Activated CD4-positive, alpha-beta T cell treated with anti-CD3 and anti-CD28 coated beads for 36 hours (primary cell): ENCODE measurements at regions of chr6 and their contacts with region 1.

Region 1: DNA sequence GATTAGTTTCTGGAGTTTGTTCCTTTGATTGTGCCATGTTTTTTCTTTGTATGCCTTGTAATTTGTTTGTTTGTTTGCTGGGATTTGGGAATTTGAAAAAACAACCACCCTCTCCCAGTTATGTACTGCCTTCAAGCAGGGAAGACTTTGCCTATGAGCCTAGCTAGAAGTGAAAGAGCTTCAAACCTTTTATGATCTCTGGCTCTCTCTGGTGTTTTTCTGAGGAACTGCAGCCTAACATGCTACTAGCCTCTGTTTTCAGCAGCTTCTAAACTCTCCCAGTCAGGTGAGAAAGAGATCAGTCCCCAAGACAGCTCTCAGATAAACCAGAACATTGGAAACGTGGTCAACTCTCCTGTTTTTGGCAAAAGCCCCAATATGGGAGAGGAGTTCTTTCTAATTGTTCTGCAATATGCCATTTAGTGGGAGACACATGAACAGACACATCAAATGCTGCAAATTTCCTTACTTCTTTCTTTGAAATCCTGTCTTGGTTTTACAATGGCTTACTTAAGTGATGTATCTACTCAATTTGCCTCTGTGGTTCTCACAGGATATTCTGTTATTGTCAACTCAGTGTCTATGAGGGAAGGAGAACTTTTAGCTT is 58.9 kb upstream of the SERINC1 start:
- DNase-seq: peak; percentile 58
- ATAC-seq: peak; percentile 72
- H3K4me3 Mint-ChIP-seq: no peak overlapping the region
- H3K27ac Mint-ChIP-seq: no peak overlapping the region
- H3K4me1 Mint-ChIP-seq: no peaks in the 10 kb centered on the region
- H3K27me3 Mint-ChIP-seq: peaks cover 22% of the 10 kb centered on the region

Region 2: GRCh38 chr6:121430514-121431460 is 1099.8 kb before region 1 on chr6:
- CTCF ChIA-PET with region 1: no interaction called
- POLR2A ChIA-PET with region 1: no interaction called
- intact Hi-C with region 1: loop called in 1 of 2 experiments (anchors 10 kb)
- DNase-seq: no peak
- ATAC-seq: no peak
- H3K4me3 Mint-ChIP-seq: no peak overlapping the region
- H3K27ac Mint-ChIP-seq: no peak overlapping the region
- H3K4me1 Mint-ChIP-seq: no peaks in the 10 kb centered on the region
- H3K27me3 Mint-ChIP-seq: peaks cover 2% of the 10 kb centered on the region

Region 3: GRCh38 chr6:122381497-122382265 is 148.9 kb before region 1 on chr6:
- CTCF ChIA-PET with region 1: interaction called, 90 read pairs
- POLR2A ChIA-PET with region 1: interaction called, 5 read pairs
- intact Hi-C with region 1: loop called (anchors 1 kb)
- DNase-seq: peak; percentile 74
- ATAC-seq: peak; percentile 99
- H3K4me3 Mint-ChIP-seq: no peak overlapping the region
- H3K27ac Mint-ChIP-seq: no peak overlapping the region
- H3K4me1 Mint-ChIP-seq: peaks cover 6% of the 10 kb centered on the region
- H3K27me3 Mint-ChIP-seq: peaks cover 8% of the 10 kb centered on the region

Region 4: GRCh38 chr6:122491919-122492555 is 38.5 kb before region 1 on chr6:
- CTCF ChIA-PET with region 1: interaction called, 210 read pairs
- POLR2A ChIA-PET with region 1: interaction called, 3 read pairs
- intact Hi-C with region 1: loop called (anchors 1 kb)
- DNase-seq: peak; percentile 83
- ATAC-seq: peak; percentile 100
- H3K4me3 Mint-ChIP-seq: no peak overlapping the region
- H3K27ac Mint-ChIP-seq: no peak overlapping the region
- H3K4me1 Mint-ChIP-seq: peaks cover 5% of the 10 kb centered on the region
- H3K27me3 Mint-ChIP-seq: peaks cover 3% of the 10 kb centered on the region

Region 5: DNA sequence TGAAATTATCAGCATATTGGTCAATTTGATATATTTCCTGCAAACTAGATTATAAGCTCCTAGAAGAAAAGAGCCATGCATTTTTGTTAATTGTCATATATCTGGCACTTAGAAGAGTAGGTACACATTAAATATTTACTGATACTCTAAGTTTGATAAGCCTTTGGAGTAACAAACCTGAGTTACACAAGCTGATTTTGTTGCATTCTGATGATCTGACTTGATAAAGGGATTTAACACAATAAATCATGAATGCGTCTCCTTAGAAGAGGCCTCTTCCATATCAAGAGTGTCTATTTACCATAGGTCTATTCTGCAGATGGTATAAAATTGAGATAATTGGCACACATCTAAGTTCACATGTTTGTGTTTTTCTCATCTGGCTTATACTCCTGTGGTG is 10.4 kb before region 1 on chr6:
- CTCF ChIA-PET with region 1: interaction called, 60 read pairs
- POLR2A ChIA-PET with region 1: no interaction called
- intact Hi-C with region 1: no loop called
- DNase-seq: no peak
- ATAC-seq: no peak
- H3K4me3 Mint-ChIP-seq: no peak overlapping the region
- H3K27ac Mint-ChIP-seq: no peak overlapping the region
- H3K4me1 Mint-ChIP-seq: no peaks in the 10 kb centered on the region
- H3K27me3 Mint-ChIP-seq: peaks cover 2% of the 10 kb centered on the region

Region 6: DNA sequence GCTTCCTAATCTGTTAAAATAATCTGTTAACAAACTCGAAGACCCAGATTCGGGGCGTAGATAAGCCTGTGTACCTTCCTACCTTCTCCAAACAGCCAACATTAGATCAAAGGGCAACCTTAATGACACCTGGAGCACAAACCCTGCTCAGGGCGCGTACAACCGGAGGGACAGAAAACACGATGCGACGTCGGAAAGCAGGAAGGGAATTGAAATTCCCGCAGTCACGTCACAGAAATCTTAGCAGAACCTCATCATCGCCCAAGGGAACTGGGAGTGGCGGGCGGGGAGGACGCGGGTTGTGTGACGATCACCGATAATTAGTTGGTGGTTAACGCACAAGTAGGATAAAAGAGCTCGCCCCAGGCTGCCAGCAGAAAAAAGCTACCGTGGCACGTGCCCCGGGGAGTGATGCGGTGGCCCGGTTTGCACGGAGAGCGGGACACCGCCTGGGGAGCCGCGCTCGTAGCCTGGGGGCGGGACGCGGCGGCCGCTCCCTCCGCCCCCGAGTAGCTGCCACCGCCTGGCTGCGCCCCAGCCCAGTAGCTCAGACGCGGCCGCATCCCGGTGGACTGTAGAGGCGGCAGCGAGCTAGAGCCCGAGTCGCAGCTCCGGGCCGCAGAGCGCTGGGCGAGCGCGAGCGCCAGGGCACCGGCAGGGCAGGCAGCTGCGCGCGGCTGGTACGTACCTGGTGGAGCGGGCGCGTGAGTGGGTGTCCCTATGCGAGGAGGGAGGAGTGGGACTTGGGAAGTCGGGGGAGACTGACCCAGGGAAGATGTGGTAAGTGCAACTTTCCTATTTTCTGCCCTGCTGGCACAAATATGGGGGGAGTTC is 79.5 kb after region 1 on chr6 and contains the start of gene PKIB:
- CTCF ChIA-PET with region 1: no interaction called
- POLR2A ChIA-PET with region 1: no interaction called
- intact Hi-C with region 1: no loop called
- DNase-seq: peak; percentile 72
- ATAC-seq: peak; percentile 97
- H3K4me3 Mint-ChIP-seq: peak within 1 kb of the TSS; percentile 72
- H3K27ac Mint-ChIP-seq: peak within 1 kb of the TSS; percentile 64
- H3K4me1 Mint-ChIP-seq: peaks cover 14% of the 10 kb centered on the region
- H3K27me3 Mint-ChIP-seq: peaks cover 40% of the 10 kb centered on the region
- total RNA-seq, gene PKIB: 2.5 to 3.1 TPM

Region 7: GRCh38 chr6:122779667-122780066 is 249.1 kb after region 1 on chr6 and contains the start of gene FABP7:
- CTCF ChIA-PET with region 1: no interaction called
- POLR2A ChIA-PET with region 1: no interaction called
- intact Hi-C with region 1: no loop called
- DNase-seq: no peak
- ATAC-seq: no peak
- H3K4me3 Mint-ChIP-seq: no peak within 1 kb of the TSS
- H3K27ac Mint-ChIP-seq: no peak within 1 kb of the TSS
- H3K4me1 Mint-ChIP-seq: no peaks in the 10 kb centered on the region
- H3K27me3 Mint-ChIP-seq: peaks cover 14% of the 10 kb centered on the region
- total RNA-seq, gene FABP7: not detected